Heart right ventricle (tissue), 16 donors: ENCODE measurements at regions of chr2 and their contacts with region 1.

Region 1: DNA sequence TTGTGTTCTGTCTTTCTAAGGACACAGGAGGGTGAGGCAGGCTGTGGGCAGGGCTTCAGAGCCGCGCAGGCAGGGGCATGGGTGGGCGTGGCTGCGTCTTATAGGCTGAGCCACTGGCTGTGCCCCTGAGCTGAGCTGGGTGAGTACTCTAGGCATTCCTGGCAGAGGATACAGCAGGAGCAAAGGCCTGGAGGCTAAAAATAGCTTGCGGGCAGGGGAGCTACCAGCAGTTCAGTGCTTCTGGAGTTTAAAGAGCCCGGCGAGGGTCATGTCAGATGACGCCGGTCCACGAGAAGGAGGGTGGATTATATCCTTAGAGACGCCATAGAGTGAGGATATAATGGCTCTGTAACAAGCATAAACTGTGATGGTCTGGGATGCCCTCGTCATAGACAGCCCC is 31.5 kb upstream of the PDIA6 start:
- DNase-seq: peak; percentile 75 to 85
- ATAC-seq: peak; percentile 79 to 93 (median 87)
- H3K4me3 ChIP-seq: peak overlapping the region in 9 of 10 donors; percentile 22 to 60 (median 53)
- H3K27ac ChIP-seq: peak overlapping the region; percentile 60 to 93 (median 88)
- H3K4me1 ChIP-seq: peaks cover 0 to 23% (median 5%) of the 10 kb centered on the region in 9 donors
- H3K27me3 ChIP-seq: peaks cover 0 to 6% (median 0%) of the 10 kb centered on the region in 7 donors
- CTCF ChIP-seq: no peak

Region 2: DNA sequence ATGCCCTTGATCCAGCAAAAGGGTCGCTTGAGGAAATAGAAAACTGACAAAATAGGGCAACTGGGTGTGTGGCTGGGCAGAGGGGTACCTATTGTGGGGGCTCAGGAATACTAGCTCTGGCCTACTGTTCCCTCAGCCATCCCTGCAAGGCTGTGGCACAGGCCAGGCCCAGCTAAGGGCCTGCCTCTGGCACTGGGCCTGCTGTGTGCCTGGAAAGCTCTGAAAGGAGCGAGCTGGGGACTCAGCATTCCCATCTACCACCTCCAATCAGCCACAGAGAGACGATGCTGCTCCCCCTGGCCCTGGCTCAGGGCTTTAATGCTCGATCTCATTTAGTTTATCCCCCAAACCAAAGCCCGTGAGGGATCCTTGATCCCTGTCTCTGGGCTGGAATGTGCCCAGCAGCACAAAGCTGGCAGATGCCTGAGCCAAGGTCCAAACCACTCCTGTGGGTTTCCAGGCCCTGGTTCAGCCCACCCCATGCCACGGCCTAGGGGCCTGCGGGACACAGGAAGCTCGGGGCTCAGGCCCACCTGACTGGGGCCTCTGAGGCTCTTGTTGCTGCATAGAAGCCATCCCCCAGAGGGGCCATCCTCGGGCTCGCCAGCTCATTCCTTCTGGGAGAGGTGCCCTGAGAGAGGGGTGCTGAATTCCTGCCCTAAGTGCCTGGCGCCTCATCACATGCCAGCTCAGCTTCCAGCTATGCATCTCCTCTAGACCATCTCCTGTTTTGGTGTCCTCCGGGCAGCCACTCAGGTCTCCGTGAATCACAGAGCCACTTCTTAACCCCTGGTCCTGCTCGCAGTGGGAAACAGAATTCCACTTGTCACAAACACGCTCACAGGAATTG is 24.6 kb after region 1 on chr2:
- intact Hi-C with region 1: loop called in 1 of 10 experiments (anchors 2 kb)
- DNase-seq: peak in 1 of 2 donors; percentile 54
- ATAC-seq: peak; percentile 54 to 89 (median 76)
- H3K4me3 ChIP-seq: peak overlapping the region in 1 of 10 donors; percentile 20
- H3K27ac ChIP-seq: peak overlapping the region; percentile 58 to 97 (median 82)
- H3K4me1 ChIP-seq: peaks cover 10 to 70% (median 37%) of the 10 kb centered on the region in 9 donors
- H3K27me3 ChIP-seq: peaks cover 0 to 22% (median 0%) of the 10 kb centered on the region in 7 donors
- CTCF ChIP-seq: no peak

Region 3: GRCh38 chr2:10873790-10874437 is 29.8 kb after region 1 on chr2:
- intact Hi-C with region 1: loop called in 3 of 10 experiments (anchors 2 to 5 kb)
- DNase-seq: peak; percentile 44 to 53
- ATAC-seq: peak; percentile 79 to 95 (median 90)
- H3K4me3 ChIP-seq: no peak overlapping the region
- H3K27ac ChIP-seq: peak overlapping the region; percentile 30 to 79 (median 70)
- H3K4me1 ChIP-seq: peaks cover 3 to 51% (median 26%) of the 10 kb centered on the region in 9 donors
- H3K27me3 ChIP-seq: no peaks in the 10 kb centered on the region
- CTCF ChIP-seq: no peak